ENCODE measurements at regions of chr3 and their contacts with region 1.

Region 1: GRCh38 chr3:55013145-55013925 is 85.5 kb upstream of the LRTM1 start:
- DNase-seq: no peak
- ATAC-seq: peak in 1 of 8 donors; percentile 42
- H3K4me3 ChIP-seq: no peak overlapping the region
- H3K27ac ChIP-seq: no peak overlapping the region
- H3K4me1 ChIP-seq: no peaks in the 10 kb centered on the region
- H3K27me3 ChIP-seq: no peaks in the 10 kb centered on the region
- CTCF ChIP-seq: peak in 1 of 9 donors; percentile 29

Region 2: DNA sequence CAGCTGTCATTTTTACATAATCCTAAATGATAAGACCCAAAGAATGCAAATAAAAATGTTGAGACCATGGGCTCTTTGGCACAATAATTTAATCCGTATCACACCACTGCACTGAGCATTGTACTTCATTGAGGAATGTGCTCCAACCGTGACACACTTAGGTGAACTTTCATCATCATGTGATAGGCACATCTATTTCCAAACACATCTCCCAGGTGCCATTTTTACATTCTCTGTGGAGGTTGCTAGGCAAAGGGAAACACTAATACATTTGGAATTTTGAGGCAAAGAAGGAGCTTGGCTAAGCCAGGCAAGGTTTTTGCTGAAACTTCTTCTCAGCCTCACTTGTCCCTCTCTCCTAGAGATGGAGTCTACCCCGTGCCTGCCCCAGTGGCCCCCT is 154.2 kb before region 1 on chr3:
- intact Hi-C with region 1: loop called in 1 of 10 experiments (anchors 10 kb)
- DNase-seq: no peak
- ATAC-seq: no peak
- H3K4me3 ChIP-seq: no peak overlapping the region
- H3K27ac ChIP-seq: no peak overlapping the region
- H3K4me1 ChIP-seq: peaks cover 0 to 33% (median 8%) of the 10 kb centered on the region in 9 donors
- H3K27me3 ChIP-seq: no peaks in the 10 kb centered on the region
- CTCF ChIP-seq: no peak

Region 3: DNA sequence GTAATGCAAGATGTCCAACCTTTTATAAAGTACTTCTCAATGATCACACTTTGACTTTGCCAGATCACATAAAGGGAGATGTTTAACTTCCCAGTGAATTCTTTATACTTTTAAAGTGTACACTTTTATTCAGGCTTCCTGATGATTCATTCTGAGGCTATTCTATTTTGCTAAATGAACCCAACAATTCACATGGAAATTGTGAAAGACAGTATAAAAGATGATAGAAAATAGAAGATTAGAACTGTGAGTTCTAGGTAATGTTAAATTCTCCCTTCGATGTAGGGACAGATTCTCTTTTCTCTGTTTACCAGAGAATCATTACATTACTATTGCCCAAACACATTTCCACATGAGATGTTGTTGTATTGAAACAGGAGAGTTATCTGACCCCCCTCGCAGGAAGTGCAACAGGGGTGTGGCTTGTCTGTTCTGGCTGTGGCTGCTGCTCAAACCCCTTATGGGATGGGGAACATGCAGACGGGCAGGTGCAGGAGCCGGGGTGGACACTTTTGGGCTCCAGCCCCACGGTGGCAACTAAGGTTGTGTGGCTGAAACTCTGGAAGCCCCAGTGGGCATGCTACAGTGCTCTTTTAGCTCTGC is 45.8 kb after region 1 on chr3:
- intact Hi-C with region 1: no loop called
- DNase-seq: no peak
- ATAC-seq: no peak
- H3K4me3 ChIP-seq: no peak overlapping the region
- H3K27ac ChIP-seq: no peak overlapping the region
- H3K4me1 ChIP-seq: no peaks in the 10 kb centered on the region
- H3K27me3 ChIP-seq: no peaks in the 10 kb centered on the region
- CTCF ChIP-seq: no peak

Region 4: DNA sequence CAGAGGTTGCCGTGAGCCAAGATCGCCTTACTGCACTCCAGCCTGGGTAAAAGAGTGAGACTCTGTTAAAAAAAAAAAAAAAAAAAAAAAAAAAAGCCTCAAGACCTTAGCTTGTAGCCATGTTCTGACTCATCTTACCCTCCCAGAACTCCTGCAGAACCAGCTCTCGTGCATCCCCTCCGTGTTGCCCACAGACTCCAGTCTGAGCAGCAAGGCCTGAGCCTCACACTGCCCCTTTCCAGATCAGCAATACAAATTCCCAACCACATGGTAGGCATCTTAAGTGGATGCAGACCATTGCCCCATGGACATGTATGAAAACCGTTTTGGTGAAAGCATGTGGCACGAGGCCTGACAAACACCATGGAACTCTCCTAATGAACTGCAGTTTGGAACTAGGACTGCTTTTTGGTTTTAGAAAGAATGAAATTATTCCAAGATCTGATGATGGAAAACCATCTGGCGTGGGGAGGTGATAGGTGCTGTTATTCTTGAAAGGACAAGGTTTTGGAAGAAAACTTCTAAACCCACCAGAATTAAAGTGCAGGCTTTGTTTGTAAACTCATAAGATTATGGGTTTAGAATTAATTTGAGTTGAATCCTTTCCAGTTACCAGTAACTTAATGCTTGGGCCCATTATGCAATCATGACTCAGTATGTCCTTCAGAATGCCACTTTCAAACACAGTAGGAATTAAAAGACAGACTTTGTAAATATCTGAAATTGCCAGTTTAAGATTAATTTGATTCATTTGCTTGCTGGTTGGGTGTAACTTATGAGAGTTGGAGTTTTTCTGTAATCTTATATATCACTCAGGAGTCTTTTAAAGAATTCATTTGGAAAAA is 78.3 kb after region 1 on chr3:
- intact Hi-C with region 1: loop called in 1 of 10 experiments (anchors 2 kb)
- DNase-seq: no peak
- ATAC-seq: no peak
- H3K4me3 ChIP-seq: no peak overlapping the region
- H3K27ac ChIP-seq: no peak overlapping the region
- H3K4me1 ChIP-seq: no peaks in the 10 kb centered on the region
- H3K27me3 ChIP-seq: peaks cover 0 to 10% (median 0%) of the 10 kb centered on the region in 7 donors
- CTCF ChIP-seq: no peak